Esophagus squamous epithelium (tissue), 5 donors: ENCODE measurements at regions of chr7 and their contacts with region 1.

Region 1: DNA sequence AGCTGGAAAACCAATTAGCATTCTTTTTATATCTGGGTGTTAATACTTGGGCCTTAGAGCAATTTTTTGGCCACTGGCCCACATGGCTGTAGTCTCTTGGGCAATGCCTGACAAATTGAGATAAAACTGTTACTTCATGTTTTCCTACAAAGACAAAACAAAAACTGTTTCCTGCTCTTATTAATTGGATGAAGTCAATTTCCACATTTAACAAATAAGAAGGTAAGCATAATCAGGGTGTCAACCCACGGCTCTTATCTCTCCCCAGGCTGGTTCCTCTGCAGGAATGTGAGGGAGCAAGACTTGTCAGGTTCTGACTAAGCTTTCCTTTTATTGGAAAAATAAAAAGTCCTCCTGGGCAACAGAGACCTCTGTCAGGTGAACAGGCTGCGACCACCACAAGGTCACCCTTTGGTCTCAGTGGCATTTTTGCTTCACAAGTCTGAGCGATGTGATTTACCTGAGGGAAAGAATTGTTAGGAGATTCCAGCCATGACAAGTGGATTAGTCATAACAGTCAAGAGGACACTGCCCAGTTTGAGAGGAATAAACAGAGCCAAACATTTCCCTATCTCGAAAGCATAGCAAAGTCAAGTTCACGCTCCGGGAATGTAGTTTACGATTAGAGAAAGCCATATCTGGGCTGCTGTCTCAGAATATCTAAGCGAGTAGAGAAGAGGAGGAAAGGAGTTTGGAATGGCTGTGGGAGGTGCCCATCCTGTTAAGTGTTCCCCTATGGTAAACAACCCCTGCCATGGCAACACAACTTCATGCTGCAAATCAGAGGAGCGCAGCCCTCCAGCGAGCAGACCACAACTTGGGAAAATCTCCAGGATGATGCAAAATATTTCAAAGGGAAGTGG is 144.4 kb downstream of the TES start:
- DNase-seq: no peak
- H3K4me3 ChIP-seq: peak overlapping the region in 1 of 4 donors; percentile 45
- H3K27ac ChIP-seq: peak overlapping the region; percentile 60 to 86 (median 80)
- H3K4me1 ChIP-seq: peaks cover 13 to 43% (median 32%) of the 10 kb centered on the region in 3 donors
- H3K27me3 ChIP-seq: no peaks in the 10 kb centered on the region
- CTCF ChIP-seq: no peak
- POLR2A ChIP-seq: no peak

Region 2: GRCh38 chr7:115763347-115763746 is 591.4 kb before region 1 on chr7:
- intact Hi-C with region 1: no loop called
- DNase-seq: no peak
- H3K4me3 ChIP-seq: no peak overlapping the region
- H3K27ac ChIP-seq: no peak overlapping the region
- H3K4me1 ChIP-seq: no peaks in the 10 kb centered on the region
- H3K27me3 ChIP-seq: no peaks in the 10 kb centered on the region
- CTCF ChIP-seq: no peak
- POLR2A ChIP-seq: no peak

Region 3: DNA sequence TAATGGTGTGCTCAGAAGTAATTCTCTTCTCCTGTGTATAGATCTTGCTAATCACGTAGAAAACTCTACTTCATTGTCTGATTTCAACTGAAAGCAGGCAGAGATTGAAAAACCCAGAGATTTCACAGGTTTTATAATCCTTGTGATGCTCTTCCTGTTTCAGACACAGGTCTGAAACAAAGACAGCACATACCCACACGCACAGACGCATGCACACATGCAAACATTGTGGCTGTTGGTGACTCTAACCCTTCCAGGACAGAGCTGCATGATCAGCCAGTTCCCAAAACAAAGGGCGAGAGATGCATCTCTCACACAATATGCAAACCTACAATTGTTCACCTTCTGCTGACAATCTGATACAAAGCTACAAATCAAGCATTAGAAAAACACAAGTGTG is 313.2 kb before region 1 on chr7:
- intact Hi-C with region 1: no loop called
- DNase-seq: no peak
- H3K4me3 ChIP-seq: no peak overlapping the region
- H3K27ac ChIP-seq: no peak overlapping the region
- H3K4me1 ChIP-seq: no peaks in the 10 kb centered on the region
- H3K27me3 ChIP-seq: no peaks in the 10 kb centered on the region
- CTCF ChIP-seq: no peak
- POLR2A ChIP-seq: no peak

Region 4: DNA sequence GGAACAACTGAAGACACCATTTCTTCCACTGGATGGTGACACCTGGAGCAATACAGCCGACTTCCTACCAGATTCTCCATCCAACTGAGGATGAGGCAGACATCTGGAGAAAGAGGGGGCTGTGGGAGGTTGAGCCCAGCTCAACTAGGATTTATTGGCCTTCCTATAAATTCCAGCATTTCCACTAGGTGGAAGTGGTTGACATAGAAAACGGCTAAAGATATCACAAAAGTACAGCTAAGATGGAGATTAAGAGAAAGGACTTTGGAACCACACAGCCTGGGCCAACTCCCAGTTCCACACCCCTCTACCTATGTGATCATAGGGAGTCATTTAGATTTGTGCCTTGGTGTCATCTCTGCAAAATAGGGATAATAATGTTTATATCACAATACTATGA is 83.5 kb after region 1 on chr7:
- intact Hi-C with region 1: loop called (anchors 10 kb)
- DNase-seq: no peak
- H3K4me3 ChIP-seq: no peak overlapping the region
- H3K27ac ChIP-seq: no peak overlapping the region
- H3K4me1 ChIP-seq: peaks cover 0 to 29% (median 12%) of the 10 kb centered on the region in 3 donors
- H3K27me3 ChIP-seq: no peaks in the 10 kb centered on the region
- CTCF ChIP-seq: peak in 1 of 6 experiments; percentile 38
- POLR2A ChIP-seq: no peak